ENCODE measurements at regions of chr3 and their contacts with region 1.

Region 1: GRCh38 chr3:87822563-87822962 is 236.2 kb downstream of the CGGBP1 start:
- DNase-seq: no peak
- H3K4me3 ChIP-seq: no peak overlapping the region
- H3K27ac ChIP-seq: no peak overlapping the region
- H3K4me1 ChIP-seq: no peaks in the 10 kb centered on the region
- H3K27me3 ChIP-seq: no peaks in the 10 kb centered on the region
- CTCF ChIP-seq: no peak
- POLR2A ChIP-seq: no peak

Region 2: GRCh38 chr3:86958534-86958933 is 864.0 kb before region 1 on chr3:
- intact Hi-C with region 1: no loop called
- DNase-seq: no peak
- H3K4me3 ChIP-seq: no peak overlapping the region
- H3K27ac ChIP-seq: no peak overlapping the region
- H3K4me1 ChIP-seq: no peaks in the 10 kb centered on the region
- H3K27me3 ChIP-seq: no peaks in the 10 kb centered on the region
- CTCF ChIP-seq: no peak
- POLR2A ChIP-seq: no peak

Region 3: DNA sequence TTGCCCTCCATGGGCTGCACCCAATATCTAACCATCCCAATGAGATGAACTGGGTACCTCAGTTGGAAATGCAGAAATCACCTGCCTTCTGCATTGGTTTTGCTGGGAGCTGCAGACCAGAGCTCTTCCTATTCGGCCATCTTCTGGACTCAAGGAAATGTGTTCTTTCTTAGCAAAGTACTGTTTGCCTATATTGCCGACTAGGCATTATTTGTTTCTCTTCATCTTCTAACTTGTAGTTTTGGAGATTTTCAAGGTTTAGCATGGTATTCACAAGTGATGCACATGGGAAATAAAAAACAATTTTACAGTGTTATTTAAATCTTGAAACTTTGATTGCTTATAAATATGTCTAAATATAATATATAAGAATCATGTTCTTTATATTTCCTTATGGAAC is 168.4 kb before region 1 on chr3:
- intact Hi-C with region 1: loop called (anchors 5 kb)
- DNase-seq: no peak
- H3K4me3 ChIP-seq: no peak overlapping the region
- H3K27ac ChIP-seq: no peak overlapping the region
- H3K4me1 ChIP-seq: no peaks in the 10 kb centered on the region
- H3K27me3 ChIP-seq: no peaks in the 10 kb centered on the region
- CTCF ChIP-seq: no peak
- POLR2A ChIP-seq: no peak

Region 4: GRCh38 chr3:87792534-87793336 is 29.8 kb before region 1 on chr3:
- intact Hi-C with region 1: no loop called
- DNase-seq: no peak
- H3K4me3 ChIP-seq: peak within 1 kb of the TSS; percentile 46 to 75 (median 47)
- H3K27ac ChIP-seq: peak within 1 kb of the TSS; percentile 27 to 80
- H3K4me1 ChIP-seq: no peaks in the 10 kb centered on the region
- H3K27me3 ChIP-seq: no peaks in the 10 kb centered on the region
- CTCF ChIP-seq: no peak
- POLR2A ChIP-seq: no peak

Region 5: GRCh38 chr3:88149509-88150362 is 327.2 kb after region 1 on chr3 and contains the start of gene C3orf38:
- intact Hi-C with region 1: no loop called
- DNase-seq: peak; percentile 78 to 84
- H3K4me3 ChIP-seq: peak within 1 kb of the TSS; percentile 70 to 88 (median 74)
- H3K27ac ChIP-seq: peak within 1 kb of the TSS; percentile 94 to 96
- H3K4me1 ChIP-seq: peaks cover 0 to 5% of the 10 kb centered on the region in 2 donors
- H3K27me3 ChIP-seq: no peaks in the 10 kb centered on the region
- CTCF ChIP-seq: peak in 1 of 3 donors; percentile 32
- POLR2A ChIP-seq: peak; percentile 52
- total RNA-seq, gene C3orf38: 20.3 to 32.1 (median 23.0) TPM

Measured in breast epithelium (tissue), 4 donors.